SK-N-SH (cell line): ENCODE measurements at regions of chr9 and their contacts with region 1.

Region 1: DNA sequence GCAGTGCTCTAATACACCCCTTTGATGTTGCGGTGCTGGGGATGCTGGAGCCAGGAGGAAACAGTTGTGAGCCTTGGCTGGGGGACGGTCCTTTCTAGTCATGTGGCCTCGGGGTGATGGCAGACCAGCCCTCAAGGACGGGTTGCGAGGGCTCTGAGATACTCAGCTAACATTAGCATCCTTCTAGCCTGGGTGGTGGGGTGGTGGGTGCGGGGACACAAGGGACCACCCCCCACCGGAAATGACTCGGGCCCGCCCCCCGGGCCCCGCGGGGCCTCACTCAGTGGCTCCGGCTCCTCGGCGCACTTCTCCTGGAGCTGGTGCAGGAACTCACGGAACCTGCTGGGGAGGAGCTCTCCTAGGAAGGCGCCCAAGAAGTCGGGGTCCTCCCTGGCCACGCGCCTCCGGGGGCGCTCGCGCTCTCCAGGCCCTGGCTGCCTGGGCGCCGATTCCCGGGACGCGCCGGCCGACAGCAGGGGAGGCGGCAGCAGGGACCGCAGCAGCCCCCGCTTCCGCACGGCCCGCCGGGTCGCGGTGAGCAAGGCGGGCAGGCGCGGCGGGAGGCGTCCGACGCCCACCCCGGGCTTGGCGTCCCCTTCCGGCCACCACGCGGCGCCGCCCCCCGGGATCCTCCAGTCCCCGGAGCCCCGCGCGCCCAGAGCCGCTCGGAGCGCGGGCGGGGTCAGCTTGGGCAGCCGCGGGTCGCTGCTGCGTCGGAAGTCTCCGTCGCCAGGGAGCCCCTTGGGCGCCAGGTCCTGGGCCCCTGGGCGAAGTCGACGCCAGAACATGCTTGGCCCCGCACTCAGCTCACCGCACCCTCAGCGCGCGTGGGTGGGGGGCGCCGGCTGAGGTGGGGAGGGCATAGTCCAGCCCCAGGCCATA is 873 bp downstream of the C9orf50 start:
- DNase-seq: peak; percentile 87
- H3K4me3 ChIP-seq: peak overlapping the region; percentile 53 to 57
- H3K27ac ChIP-seq: peak overlapping the region in 1 of 2 experiments; percentile 60; a peak in 1 of 4 replicates
- H3K4me1 ChIP-seq: peaks cover 0 to 12% of the 10 kb centered on the region in 2 experiments; a peak in 1 of 4 replicates
- H3K27me3 ChIP-seq: no peaks in the 10 kb centered on the region
- CTCF ChIP-seq: peak; percentile 37; the same call in 1 of the 2 replicates
- EP300 ChIP-seq: no peak
- RAD21 ChIP-seq: no peak

Region 2: GRCh38 chr9:129172802-129173201 is 447.2 kb before region 1 on chr9:
- CTCF ChIA-PET with region 1: interaction called, 183 read pairs
- POLR2A ChIA-PET with region 1: no interaction called
- DNase-seq: no peak
- H3K4me3 ChIP-seq: no peak overlapping the region
- H3K27ac ChIP-seq: peak overlapping the region in 1 of 2 experiments; percentile 97; a peak in 1 of 4 replicates
- H3K4me1 ChIP-seq: peaks cover 13 to 15% of the 10 kb centered on the region in 2 experiments; a peak in 3 of 4 replicates
- H3K27me3 ChIP-seq: no peaks in the 10 kb centered on the region
- CTCF ChIP-seq: no peak
- EP300 ChIP-seq: no peak
- RAD21 ChIP-seq: no peak